Transverse colon (tissue), 4 donors: ENCODE measurements at regions of chr12 and their contacts with region 1.

Region 1: DNA sequence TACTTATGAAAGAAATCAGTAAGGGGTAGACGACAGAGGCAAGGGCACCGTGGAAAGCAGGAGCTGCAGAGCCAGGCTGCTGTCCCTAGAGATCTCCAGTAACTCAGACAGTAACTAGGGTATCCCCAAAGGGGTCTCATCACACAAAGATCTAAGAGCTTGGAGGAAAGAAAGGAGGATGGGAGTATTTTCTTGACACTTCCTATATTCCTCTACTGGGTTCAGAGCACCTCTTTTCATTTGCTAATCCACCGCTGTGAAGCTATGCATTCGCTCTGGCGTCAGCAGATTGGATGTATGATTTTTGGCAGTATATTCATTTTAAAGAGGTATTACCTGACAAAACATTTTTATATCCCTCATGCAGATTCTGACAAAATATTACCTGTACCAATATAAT is 12.6 kb downstream of the USP44 start:
- DNase-seq: no peak
- H3K4me3 ChIP-seq: no peak overlapping the region
- H3K27ac ChIP-seq: no peak overlapping the region
- H3K4me1 ChIP-seq: peaks cover 0 to 18% (median 0%) of the 10 kb centered on the region in 4 donors
- H3K27me3 ChIP-seq: no peaks in the 10 kb centered on the region
- CTCF ChIP-seq: no peak
- EP300 ChIP-seq: no peak
- POLR2A ChIP-seq: no peak

Region 2: DNA sequence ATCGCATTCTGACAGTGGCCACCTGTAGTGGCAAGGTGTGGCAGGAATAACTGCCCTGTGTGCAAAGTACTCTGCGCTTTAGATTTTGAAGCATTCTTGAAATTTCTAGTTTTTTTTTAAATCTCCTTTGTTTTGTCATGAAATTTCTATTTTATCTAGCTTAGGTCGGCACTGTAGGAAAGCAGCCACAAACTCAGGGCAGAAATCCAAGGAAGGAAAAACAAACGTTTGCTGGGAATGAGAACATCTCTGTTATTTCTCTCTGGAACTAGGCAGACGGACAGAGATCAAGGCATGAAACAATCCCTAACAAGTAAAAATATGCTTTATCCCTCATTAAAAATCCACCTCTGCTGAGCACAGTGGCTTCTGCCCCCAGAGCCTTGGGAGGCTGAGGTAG is 463.9 kb before region 1 on chr12:
- in situ Hi-C with region 1: no loop called
- intact Hi-C with region 1: loop called (anchors 5 kb)
- DNase-seq: no peak
- H3K4me3 ChIP-seq: no peak overlapping the region
- H3K27ac ChIP-seq: peak overlapping the region in 2 of 4 donors; percentile 40 to 93
- H3K4me1 ChIP-seq: peaks cover 6 to 13% (median 9%) of the 10 kb centered on the region in 4 donors
- H3K27me3 ChIP-seq: no peaks in the 10 kb centered on the region
- CTCF ChIP-seq: no peak
- EP300 ChIP-seq: no peak
- POLR2A ChIP-seq: no peak

Region 3: GRCh38 chr12:95336390-95337067 is 202.1 kb before region 1 on chr12:
- in situ Hi-C with region 1: no loop called
- intact Hi-C with region 1: no loop called
- DNase-seq: peak; percentile 66
- H3K4me3 ChIP-seq: no peak overlapping the region
- H3K27ac ChIP-seq: peak overlapping the region; percentile 48 to 76 (median 58)
- H3K4me1 ChIP-seq: peaks cover 0 to 9% (median 0%) of the 10 kb centered on the region in 4 donors
- H3K27me3 ChIP-seq: no peaks in the 10 kb centered on the region
- CTCF ChIP-seq: peak; percentile 55 to 70 (median 65)
- EP300 ChIP-seq: no peak
- POLR2A ChIP-seq: no peak

Region 4: DNA sequence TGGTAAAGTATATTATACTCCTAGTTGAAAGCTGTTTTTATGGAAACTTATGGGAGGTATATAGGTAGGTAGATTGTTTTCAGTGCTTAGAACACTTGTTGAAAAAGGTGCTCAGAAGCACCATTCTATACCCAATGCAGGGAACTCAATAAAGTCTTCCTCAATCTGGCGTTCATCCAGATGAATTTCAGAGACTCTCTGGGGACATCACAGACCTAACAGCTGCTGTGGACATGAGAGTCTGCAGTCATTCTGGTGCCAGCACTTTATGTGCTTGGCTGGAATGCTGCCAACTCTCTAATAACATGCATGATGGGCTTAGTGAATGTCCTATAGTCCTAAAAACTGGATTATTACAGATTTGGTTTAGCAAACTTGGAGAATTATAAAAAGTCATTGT is 136.0 kb after region 1 on chr12:
- in situ Hi-C with region 1: no loop called
- intact Hi-C with region 1: no loop called
- DNase-seq: no peak
- H3K4me3 ChIP-seq: no peak overlapping the region
- H3K27ac ChIP-seq: peak overlapping the region in 2 of 4 donors; percentile 10 to 16
- H3K4me1 ChIP-seq: peaks cover 0 to 18% (median 12%) of the 10 kb centered on the region in 4 donors
- H3K27me3 ChIP-seq: no peaks in the 10 kb centered on the region
- CTCF ChIP-seq: no peak
- EP300 ChIP-seq: no peak
- POLR2A ChIP-seq: no peak